ENCODE measurements at regions of chr14 and their contacts with region 1.

Region 1: DNA sequence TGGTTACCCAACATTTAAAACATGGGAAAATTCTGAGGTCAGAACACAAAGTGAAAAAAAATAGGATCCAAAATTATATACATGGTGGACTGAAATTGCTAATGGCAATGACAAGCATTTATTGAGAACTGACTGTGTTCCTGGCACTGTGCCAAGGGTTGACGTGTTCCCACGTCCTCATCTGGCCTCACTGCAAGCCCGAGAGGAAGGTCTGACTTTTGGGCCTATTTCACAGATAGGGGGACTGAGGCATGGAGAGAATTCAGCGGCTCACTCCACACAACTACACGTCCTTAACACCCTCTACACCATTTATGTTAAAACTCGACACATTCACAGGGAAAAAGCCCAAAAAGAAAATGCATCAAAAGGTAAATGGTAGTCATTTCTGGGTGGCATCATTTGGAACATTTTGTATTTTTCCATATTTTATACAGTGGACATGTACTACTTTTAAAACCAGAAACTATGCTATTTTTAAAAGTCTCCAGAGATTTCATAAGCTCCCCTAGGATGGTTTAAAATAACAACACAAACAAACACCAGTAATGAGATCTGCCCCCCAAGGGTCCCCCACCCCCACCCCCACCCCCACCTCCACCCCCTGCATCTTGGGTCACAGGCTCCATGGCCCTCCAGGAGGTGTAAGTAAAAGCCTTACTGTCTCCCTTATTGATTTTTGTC is 27.7 kb downstream of the CLMN start:
- DNase-seq: peak in 8 of 10 donors; percentile 60 to 86 (median 74)
- H3K4me3 ChIP-seq: no peak overlapping the region
- H3K27ac ChIP-seq: peak overlapping the region in 58 of 59 donors; percentile 54 to 100 (median 86)
- H3K27me3 ChIP-seq: no peaks in the 10 kb centered on the region
- CTCF ChIP-seq: peak in 4 of 56 donors; percentile 8 to 15 (median 10)

Region 2: DNA sequence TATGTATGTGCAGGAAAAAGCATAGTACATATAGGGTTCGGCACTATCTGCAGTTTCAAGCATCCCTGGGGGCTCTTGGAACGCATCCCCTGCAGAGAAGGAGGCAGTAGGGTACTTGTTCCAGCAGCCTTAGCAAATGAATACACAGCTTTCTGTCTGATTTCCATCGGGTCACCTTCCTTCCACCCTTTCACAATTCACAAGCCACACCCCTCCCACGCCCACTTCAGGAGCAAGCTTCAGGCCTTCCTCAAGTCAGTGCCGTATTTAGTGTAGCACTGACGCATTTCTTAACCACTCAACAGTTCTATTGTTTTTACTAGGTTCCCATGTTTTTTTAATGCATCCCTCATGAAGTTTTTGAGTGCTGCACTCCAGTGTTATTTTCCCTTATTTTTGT is 36.5 kb before region 1 on chr14:
- intact Hi-C with region 1: loop called in 1 of 2 experiments (anchors 5 kb)
- DNase-seq: no peak
- H3K4me3 ChIP-seq: peak overlapping the region in 1 of 59 donors; percentile 3
- H3K27ac ChIP-seq: peak overlapping the region in 46 of 59 donors; percentile 12 to 87 (median 70)
- H3K27me3 ChIP-seq: no peaks in the 10 kb centered on the region
- CTCF ChIP-seq: no peak

Region 3: GRCh38 chr14:95370076-95370475 is 78.1 kb after region 1 on chr14:
- intact Hi-C with region 1: no loop called
- DNase-seq: no peak
- H3K4me3 ChIP-seq: no peak overlapping the region
- H3K27ac ChIP-seq: no peak overlapping the region
- H3K27me3 ChIP-seq: peaks cover 0 to 5% (median 0%) of the 10 kb centered on the region in 45 donors
- CTCF ChIP-seq: no peak

Region 4: GRCh38 chr14:95561001-95561412 is 269.0 kb after region 1 on chr14:
- intact Hi-C with region 1: no loop called
- DNase-seq: peak; percentile 73 to 94 (median 88)
- H3K4me3 ChIP-seq: peak overlapping the region in 3 of 59 donors; percentile 2 to 9 (median 6)
- H3K27ac ChIP-seq: no peak overlapping the region
- H3K27me3 ChIP-seq: no peaks in the 10 kb centered on the region
- CTCF ChIP-seq: peak; percentile 89 to 100 (median 98)